ENCODE measurements at regions of chr11 and their contacts with region 1.

Region 1: GRCh38 chr11:128172046-128172878 is 415.1 kb downstream of the ETS1 start:
- DNase-seq: peak; percentile 73 to 87
- ATAC-seq: peak in 7 of 8 donors; percentile 77 to 92 (median 87)
- H3K4me3 ChIP-seq: no peak overlapping the region
- H3K27ac ChIP-seq: peak overlapping the region in 1 of 10 donors; percentile 16
- H3K4me1 ChIP-seq: peaks cover 0 to 13% (median 0%) of the 10 kb centered on the region in 9 donors
- H3K27me3 ChIP-seq: peaks cover 0 to 5% (median 0%) of the 10 kb centered on the region in 7 donors
- CTCF ChIP-seq: peak; percentile 59 to 89 (median 82)

Region 2: GRCh38 chr11:128045094-128045725 is 127.1 kb before region 1 on chr11:
- intact Hi-C with region 1: no loop called
- DNase-seq: no peak
- ATAC-seq: no peak
- H3K4me3 ChIP-seq: no peak overlapping the region
- H3K27ac ChIP-seq: no peak overlapping the region
- H3K4me1 ChIP-seq: peaks cover 0 to 18% (median 0%) of the 10 kb centered on the region in 9 donors
- H3K27me3 ChIP-seq: peaks cover 0 to 8% (median 0%) of the 10 kb centered on the region in 7 donors
- CTCF ChIP-seq: no peak

Region 3: DNA sequence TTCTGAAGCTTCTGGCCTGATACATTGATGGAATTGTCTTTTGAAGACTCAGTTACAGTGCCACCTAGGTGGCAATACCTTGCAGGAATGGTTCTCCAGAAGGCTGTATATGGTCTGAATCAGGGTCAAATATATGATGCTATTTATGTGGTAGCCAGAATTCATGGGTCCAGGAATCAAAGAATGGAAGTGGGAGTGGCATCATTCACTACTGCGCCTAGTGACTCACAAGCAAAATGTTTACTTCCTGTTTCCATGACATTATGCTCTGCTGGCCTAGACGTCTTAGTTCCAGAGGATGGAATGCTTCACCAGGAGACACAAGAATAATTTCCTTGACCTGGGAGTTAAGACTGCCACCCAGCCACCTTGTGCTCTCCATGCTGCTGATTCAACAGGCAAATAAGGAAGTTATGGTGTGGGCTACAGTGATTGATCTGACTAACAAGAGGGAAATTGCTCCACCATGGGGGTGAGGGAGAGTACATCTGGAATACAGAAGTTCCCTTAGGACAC is 76.7 kb before region 1 on chr11:
- intact Hi-C with region 1: no loop called
- DNase-seq: peak in 1 of 2 donors; percentile 5
- ATAC-seq: peak in 5 of 8 donors; percentile 58 to 87 (median 75)
- H3K4me3 ChIP-seq: no peak overlapping the region
- H3K27ac ChIP-seq: peak overlapping the region in 1 of 10 donors; percentile 41
- H3K4me1 ChIP-seq: peaks cover 0 to 4% (median 0%) of the 10 kb centered on the region in 9 donors
- H3K27me3 ChIP-seq: no peaks in the 10 kb centered on the region
- CTCF ChIP-seq: peak in 2 of 9 donors; percentile 14 to 15

Region 4: DNA sequence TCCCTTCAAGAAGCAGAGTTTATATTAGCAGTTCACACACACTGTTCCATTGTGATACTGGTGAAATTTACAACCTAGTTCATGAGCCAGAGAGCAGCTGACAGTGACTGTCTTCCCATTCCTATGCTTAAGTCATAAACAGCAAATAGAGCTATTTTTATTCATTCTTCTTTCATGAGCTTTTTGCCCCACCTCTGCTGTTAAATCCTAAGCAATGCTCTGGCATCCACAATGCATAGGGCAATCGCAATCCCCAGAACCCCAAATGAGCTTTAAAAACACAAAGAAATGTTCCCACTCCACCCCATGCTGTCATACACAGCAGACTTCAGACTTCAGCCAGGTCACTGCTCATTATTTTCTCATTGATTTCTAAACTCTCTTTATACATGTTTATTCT is 107.6 kb after region 1 on chr11:
- intact Hi-C with region 1: loop called in 7 of 10 experiments (anchors 5 to 10 kb)
- DNase-seq: no peak
- ATAC-seq: no peak
- H3K4me3 ChIP-seq: no peak overlapping the region
- H3K27ac ChIP-seq: no peak overlapping the region
- H3K4me1 ChIP-seq: no peaks in the 10 kb centered on the region
- H3K27me3 ChIP-seq: no peaks in the 10 kb centered on the region
- CTCF ChIP-seq: no peak

Region 5: GRCh38 chr11:128552783-128553661 is 380.8 kb after region 1 on chr11:
- intact Hi-C with region 1: loop called in 1 of 10 experiments (anchors 5 kb)
- DNase-seq: no peak
- ATAC-seq: peak in 3 of 8 donors; percentile 2 to 54 (median 23)
- H3K4me3 ChIP-seq: no peak overlapping the region
- H3K27ac ChIP-seq: peak overlapping the region in 7 of 10 donors; percentile 34 to 85 (median 50)
- H3K4me1 ChIP-seq: peaks cover 3 to 76% (median 56%) of the 10 kb centered on the region in 9 donors
- H3K27me3 ChIP-seq: no peaks in the 10 kb centered on the region
- CTCF ChIP-seq: no peak

Region 6: DNA sequence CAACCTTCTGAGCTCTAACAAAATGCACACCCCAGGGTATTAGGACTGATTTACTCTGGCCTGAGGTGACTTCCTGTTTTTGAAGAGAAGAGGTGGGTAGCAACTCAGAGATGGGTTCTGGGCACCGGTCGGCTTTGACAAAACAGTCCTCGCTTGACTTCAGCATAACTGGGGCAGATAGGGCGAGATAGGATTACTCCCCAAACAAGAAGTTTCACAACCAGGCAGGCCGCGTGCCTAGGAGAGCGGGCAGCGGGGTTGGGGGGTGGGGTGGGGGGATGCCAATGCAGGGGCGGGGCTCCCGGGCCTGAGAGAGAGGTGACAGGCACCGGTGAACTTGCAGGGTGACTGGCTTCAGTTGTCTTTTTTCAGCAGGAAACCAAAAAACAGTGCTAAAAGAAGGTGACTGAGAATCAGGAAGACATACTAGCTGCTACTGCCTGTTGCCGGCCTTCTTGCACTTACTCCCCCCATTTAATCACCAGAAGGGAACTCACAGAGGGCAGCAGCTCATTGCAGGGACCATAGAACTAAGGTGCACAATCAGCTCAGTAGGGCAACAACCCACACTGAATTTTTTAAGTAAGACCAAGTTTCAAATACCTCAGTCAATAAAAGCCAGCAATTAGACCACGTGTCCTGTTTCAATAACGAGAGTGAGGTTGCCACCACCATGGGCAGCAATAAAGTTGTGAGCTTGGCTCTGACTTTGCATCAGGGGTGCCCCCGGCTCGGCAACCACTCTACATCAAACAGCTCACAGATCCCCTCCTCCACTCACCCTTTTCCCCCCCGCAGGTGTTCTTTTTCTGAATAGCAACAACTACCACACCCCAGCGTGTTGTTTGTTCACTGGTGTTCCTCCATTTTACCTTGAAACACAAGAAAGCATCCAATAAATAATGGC is 452.3 kb after region 1 on chr11:
- intact Hi-C with region 1: loop called in 1 of 10 experiments (anchors 5 kb)
- DNase-seq: no peak
- ATAC-seq: no peak
- H3K4me3 ChIP-seq: no peak overlapping the region
- H3K27ac ChIP-seq: peak overlapping the region in 1 of 10 donors; percentile 80
- H3K4me1 ChIP-seq: peaks cover 0 to 84% (median 14%) of the 10 kb centered on the region in 9 donors
- H3K27me3 ChIP-seq: no peaks in the 10 kb centered on the region
- CTCF ChIP-seq: no peak

Region 7: GRCh38 chr11:128859563-128860441 is 687.5 kb after region 1 on chr11:
- intact Hi-C with region 1: loop called in 2 of 10 experiments (anchors 5 to 10 kb)
- DNase-seq: peak; percentile 71 to 80
- ATAC-seq: peak; percentile 65 to 89 (median 86)
- H3K4me3 ChIP-seq: no peak overlapping the region
- H3K27ac ChIP-seq: peak overlapping the region in 4 of 10 donors; percentile 1 to 40 (median 22)
- H3K4me1 ChIP-seq: peaks cover 5 to 15% (median 10%) of the 10 kb centered on the region in 9 donors
- H3K27me3 ChIP-seq: no peaks in the 10 kb centered on the region
- CTCF ChIP-seq: peak; percentile 90 to 99 (median 96)

Region 8: DNA sequence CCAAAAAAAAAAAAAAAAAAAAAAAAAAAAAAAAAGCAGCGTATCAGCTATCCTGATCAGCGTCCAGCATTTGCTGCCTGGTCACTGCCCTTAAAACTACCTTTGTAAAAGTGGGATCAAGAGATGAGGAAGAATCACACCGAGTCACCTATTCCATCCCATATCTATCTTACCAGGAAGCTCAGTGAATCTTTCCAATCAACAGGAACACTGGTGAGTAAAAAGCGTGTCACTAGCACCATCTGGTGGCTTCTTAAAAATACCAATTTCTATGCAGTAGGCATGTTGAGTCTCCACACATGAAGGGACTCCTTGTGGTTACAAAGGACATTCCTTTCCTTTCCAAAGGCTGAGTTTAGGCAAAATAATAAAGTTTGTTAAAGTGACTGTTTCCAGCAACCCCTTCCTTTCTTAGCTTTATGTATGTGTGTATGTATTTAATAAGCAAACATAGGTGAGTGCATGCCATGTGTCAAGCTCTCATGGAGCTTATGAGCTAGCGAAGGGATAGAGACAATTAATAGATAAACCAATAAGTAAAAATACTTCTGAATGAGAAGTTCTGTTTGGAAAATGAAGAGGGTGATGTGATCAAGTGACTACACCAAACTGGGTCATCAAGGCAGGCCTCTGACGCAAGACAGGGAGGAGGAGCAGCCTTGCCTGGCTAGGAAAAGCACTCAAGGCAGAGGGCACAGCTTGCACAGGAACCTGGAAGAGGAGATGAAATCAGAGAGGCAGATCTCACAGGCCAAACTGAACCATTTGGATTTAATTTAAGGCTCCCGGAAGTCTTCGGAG is 784.3 kb after region 1 on chr11:
- intact Hi-C with region 1: loop called in 1 of 10 experiments (anchors 5 kb)
- DNase-seq: peak in 1 of 2 donors; percentile 58
- ATAC-seq: peak; percentile 59 to 89 (median 83)
- H3K4me3 ChIP-seq: no peak overlapping the region
- H3K27ac ChIP-seq: no peak overlapping the region
- H3K4me1 ChIP-seq: no peaks in the 10 kb centered on the region
- H3K27me3 ChIP-seq: peaks cover 0 to 20% (median 6%) of the 10 kb centered on the region in 7 donors
- CTCF ChIP-seq: peak; percentile 43 to 82 (median 75)

Measured in heart right ventricle (tissue), 16 donors.